Panc1 (cell line): ENCODE measurements at regions of chr11 and their contacts with region 1.

Region 1: GRCh38 chr11:17354601-17354991 is 3.0 kb downstream of the NCR3LG1 start:
- DNase-seq: peak; percentile 61
- ATAC-seq: 0 out of 2 replicates have a peak, but pooled peaks have one; percentile 48
- H3K4me3 ChIP-seq: peak overlapping the region; percentile 58 to 89; a peak in 3 of 4 replicates
- H3K27ac ChIP-seq: no peak overlapping the region
- H3K4me1 ChIP-seq: peaks cover 4% of the 10 kb centered on the region; the same call in 1 of the 2 replicates
- H3K27me3 ChIP-seq: no peaks in the 10 kb centered on the region
- CTCF ChIP-seq: peak; percentile 75; the same call in 1 of the 2 replicates

Region 2: GRCh38 chr11:17230867-17231851 is 123.4 kb before region 1 on chr11:
- CTCF ChIA-PET with region 1: no interaction called
- POLR2A ChIA-PET with region 1: no interaction called
- in situ Hi-C with region 1: no loop called
- intact Hi-C with region 1: loop called (anchors 5 kb)
- DNase-seq: no peak
- ATAC-seq: no peak
- H3K4me3 ChIP-seq: no peak overlapping the region
- H3K27ac ChIP-seq: no peak overlapping the region
- H3K4me1 ChIP-seq: no peaks in the 10 kb centered on the region
- H3K27me3 ChIP-seq: no peaks in the 10 kb centered on the region
- CTCF ChIP-seq: no peak

Region 3: DNA sequence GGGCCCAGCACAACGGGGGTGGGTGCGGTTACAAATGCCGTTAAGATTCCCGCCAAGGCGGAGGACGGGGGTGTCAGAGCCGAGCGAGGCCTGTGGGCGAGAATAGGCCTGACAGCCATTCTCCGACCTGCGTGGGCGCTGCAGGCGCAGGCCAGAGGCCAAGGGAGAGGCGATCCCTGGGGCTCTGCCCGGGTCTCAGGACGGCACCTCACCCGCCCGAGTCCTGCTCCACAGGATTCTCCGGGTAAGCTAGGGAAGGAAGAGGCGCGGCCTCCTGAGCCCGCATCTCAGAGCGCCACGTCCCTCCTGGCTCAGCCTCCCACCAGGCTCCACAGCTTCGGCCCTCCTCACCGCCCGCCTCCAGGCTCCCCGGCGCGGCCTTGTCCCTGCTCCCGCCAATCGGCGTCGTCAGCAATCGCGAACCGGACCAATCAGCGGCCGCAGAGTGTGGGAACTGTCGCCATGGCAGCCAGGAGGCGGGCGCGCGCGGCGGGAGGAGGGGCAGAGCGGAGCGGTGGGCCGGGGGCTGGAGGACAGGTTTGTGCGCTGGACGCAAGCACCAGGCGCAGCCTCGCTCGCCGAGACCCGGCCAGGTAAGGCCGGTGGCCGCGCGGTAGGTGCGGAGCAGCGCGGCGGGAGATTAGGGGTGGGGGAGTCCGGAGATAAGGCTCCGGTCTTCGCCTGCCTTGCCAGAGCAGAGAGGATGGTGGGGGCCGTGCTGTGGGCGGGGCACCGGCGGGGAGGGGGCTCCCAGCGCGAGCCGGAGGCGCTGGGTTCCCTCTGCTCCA is 78.2 kb before region 1 on chr11 and contains the start of gene NUCB2:
- CTCF ChIA-PET with region 1: interaction called, 9 read pairs
- POLR2A ChIA-PET with region 1: interaction called, 3 read pairs
- in situ Hi-C with region 1: no loop called
- intact Hi-C with region 1: loop called (anchors 5 kb)
- DNase-seq: no peak
- ATAC-seq: peak; percentile 98
- H3K4me3 ChIP-seq: peak within 1 kb of the TSS; percentile 74 to 84
- H3K27ac ChIP-seq: peak within 1 kb of the TSS; percentile 94
- H3K4me1 ChIP-seq: peaks cover 17% of the 10 kb centered on the region
- H3K27me3 ChIP-seq: no peaks in the 10 kb centered on the region
- CTCF ChIP-seq: no peak
- total RNA-seq, gene NUCB2: 62.2 TPM

Region 4: GRCh38 chr11:17384002-17384511 is 29.5 kb after region 1 on chr11:
- CTCF ChIA-PET with region 1: interaction called, 16 read pairs
- POLR2A ChIA-PET with region 1: no interaction called
- in situ Hi-C with region 1: no loop called
- intact Hi-C with region 1: no loop called
- DNase-seq: peak; percentile 56
- ATAC-seq: peak; percentile 74
- H3K4me3 ChIP-seq: no peak overlapping the region
- H3K27ac ChIP-seq: no peak overlapping the region
- H3K4me1 ChIP-seq: no peaks in the 10 kb centered on the region
- H3K27me3 ChIP-seq: no peaks in the 10 kb centered on the region
- CTCF ChIP-seq: peak; percentile 93

Region 5: GRCh38 chr11:17412488-17413180 is 58.0 kb after region 1 on chr11:
- CTCF ChIA-PET with region 1: no interaction called
- POLR2A ChIA-PET with region 1: no interaction called
- in situ Hi-C with region 1: no loop called
- intact Hi-C with region 1: no loop called
- DNase-seq: no peak
- ATAC-seq: no peak
- H3K4me3 ChIP-seq: no peak overlapping the region
- H3K27ac ChIP-seq: no peak overlapping the region
- H3K4me1 ChIP-seq: no peaks in the 10 kb centered on the region
- H3K27me3 ChIP-seq: peaks cover 4% of the 10 kb centered on the region; the same call in 1 of the 2 replicates
- CTCF ChIP-seq: no peak

Region 6: DNA sequence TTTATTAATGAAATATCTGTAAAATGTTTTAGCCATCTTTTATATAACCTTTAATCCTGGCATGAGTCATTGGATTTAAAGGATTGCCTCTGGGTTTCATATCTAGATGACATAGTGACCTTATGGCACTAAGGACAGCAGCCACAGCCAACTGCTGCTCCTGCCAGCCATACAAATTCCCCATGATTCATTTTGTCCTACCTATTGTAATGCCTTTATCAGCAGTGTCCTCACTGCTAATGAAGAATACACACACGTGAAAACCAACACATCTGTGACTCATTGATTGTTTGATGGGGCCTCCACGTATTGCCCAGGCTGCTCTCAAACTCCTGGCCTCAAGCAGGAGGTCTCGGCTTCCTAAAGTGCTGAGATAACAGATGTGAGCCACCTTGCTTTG is 1102.8 kb after region 1 on chr11:
- CTCF ChIA-PET with region 1: no interaction called
- POLR2A ChIA-PET with region 1: interaction called, 14 read pairs
- in situ Hi-C with region 1: no loop called
- intact Hi-C with region 1: no loop called
- DNase-seq: no peak
- ATAC-seq: peak; percentile 85
- H3K4me3 ChIP-seq: no peak overlapping the region
- H3K27ac ChIP-seq: no peak overlapping the region
- H3K4me1 ChIP-seq: peaks cover 5% of the 10 kb centered on the region; the same call in 1 of the 2 replicates
- H3K27me3 ChIP-seq: no peaks in the 10 kb centered on the region
- CTCF ChIP-seq: no peak